Activated T-helper 1 cell treated with anti-CD3 and anti-CD28 coated beads, Interleukin-12 subunit alpha, Interleukin-12 subunit beta, Interleukin-2, Interleukin-4 antibody, amounts not matched to agents 30 ng/mL and 10 ng/mL and 1 ng/mL, durations not matched to agents 14 hours and 24 hours and 36 hours (primary cell): ENCODE measurements at regions of chr21 and their contacts with region 1.

Region 1: GRCh38 chr21:33976082-33977016 is 60.7 kb upstream of the ATP5PO start:
- DNase-seq: peak; percentile 48
- H3K4me3 Mint-ChIP-seq: peak overlapping the region; percentile 75
- H3K27ac Mint-ChIP-seq: peak overlapping the region; percentile 100
- H3K4me1 Mint-ChIP-seq: peaks cover 75% of the 10 kb centered on the region
- H3K27me3 Mint-ChIP-seq: no peaks in the 10 kb centered on the region

Region 2: GRCh38 chr21:33915368-33916199 is 60.8 kb before region 1 on chr21 and contains the start of gene ATP5PO:
- intact Hi-C with region 1: loop called (anchors 1 kb)
- DNase-seq: peak; percentile 97
- H3K4me3 Mint-ChIP-seq: peak within 1 kb of the TSS; percentile 99
- H3K27ac Mint-ChIP-seq: peak within 1 kb of the TSS; percentile 98
- H3K4me1 Mint-ChIP-seq: peaks cover 39% of the 10 kb centered on the region
- H3K27me3 Mint-ChIP-seq: no peaks in the 10 kb centered on the region
- total RNA-seq, gene ATP5PO: 168 and 176 TPM in 2 replicates

Region 3: GRCh38 chr21:33931799-33932390 is 44.5 kb before region 1 on chr21:
- intact Hi-C with region 1: loop called (anchors 5 kb)
- DNase-seq: no peak
- H3K4me3 Mint-ChIP-seq: peak overlapping the region; percentile 97
- H3K27ac Mint-ChIP-seq: peak overlapping the region; percentile 94
- H3K4me1 Mint-ChIP-seq: peaks cover 46% of the 10 kb centered on the region
- H3K27me3 Mint-ChIP-seq: no peaks in the 10 kb centered on the region

Region 4: DNA sequence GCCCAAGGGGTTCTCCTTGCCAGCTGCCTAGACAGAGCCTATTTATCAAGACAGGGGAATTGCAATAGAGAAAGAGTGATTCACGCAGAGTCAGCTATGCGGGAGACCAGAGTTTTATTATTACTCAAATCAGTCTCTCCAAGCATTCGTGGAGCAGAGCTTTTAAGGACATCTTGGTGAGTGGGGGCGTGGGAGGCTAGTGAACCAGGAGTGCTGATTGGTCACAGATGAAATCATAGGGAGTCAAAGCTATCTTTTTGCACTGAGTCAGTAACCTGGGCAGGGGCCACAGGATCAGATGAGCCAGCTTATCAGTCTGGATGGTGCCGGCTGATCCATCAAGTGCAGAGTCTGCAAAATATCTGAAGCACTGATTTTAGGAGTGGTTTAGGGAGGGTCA is 32.3 kb after region 1 on chr21:
- intact Hi-C with region 1: loop called (anchors 1 kb)
- DNase-seq: no peak
- H3K4me3 Mint-ChIP-seq: no peak overlapping the region
- H3K27ac Mint-ChIP-seq: peak overlapping the region; percentile 50
- H3K4me1 Mint-ChIP-seq: peaks cover 22% of the 10 kb centered on the region
- H3K27me3 Mint-ChIP-seq: no peaks in the 10 kb centered on the region

Region 5: GRCh38 chr21:34029743-34030528 is 53.6 kb after region 1 on chr21:
- intact Hi-C with region 1: loop called (anchors 2 kb)
- DNase-seq: peak; percentile 42
- H3K4me3 Mint-ChIP-seq: peak overlapping the region; percentile 51
- H3K27ac Mint-ChIP-seq: peak overlapping the region; percentile 96
- H3K4me1 Mint-ChIP-seq: peaks cover 30% of the 10 kb centered on the region
- H3K27me3 Mint-ChIP-seq: no peaks in the 10 kb centered on the region

Region 6: GRCh38 chr21:34129039-34129891 is 152.9 kb after region 1 on chr21:
- intact Hi-C with region 1: loop called (anchors 1 kb)
- DNase-seq: peak; percentile 72
- H3K4me3 Mint-ChIP-seq: peak overlapping the region; percentile 64
- H3K27ac Mint-ChIP-seq: peak overlapping the region; percentile 97
- H3K4me1 Mint-ChIP-seq: peaks cover 79% of the 10 kb centered on the region
- H3K27me3 Mint-ChIP-seq: no peaks in the 10 kb centered on the region

Region 7: DNA sequence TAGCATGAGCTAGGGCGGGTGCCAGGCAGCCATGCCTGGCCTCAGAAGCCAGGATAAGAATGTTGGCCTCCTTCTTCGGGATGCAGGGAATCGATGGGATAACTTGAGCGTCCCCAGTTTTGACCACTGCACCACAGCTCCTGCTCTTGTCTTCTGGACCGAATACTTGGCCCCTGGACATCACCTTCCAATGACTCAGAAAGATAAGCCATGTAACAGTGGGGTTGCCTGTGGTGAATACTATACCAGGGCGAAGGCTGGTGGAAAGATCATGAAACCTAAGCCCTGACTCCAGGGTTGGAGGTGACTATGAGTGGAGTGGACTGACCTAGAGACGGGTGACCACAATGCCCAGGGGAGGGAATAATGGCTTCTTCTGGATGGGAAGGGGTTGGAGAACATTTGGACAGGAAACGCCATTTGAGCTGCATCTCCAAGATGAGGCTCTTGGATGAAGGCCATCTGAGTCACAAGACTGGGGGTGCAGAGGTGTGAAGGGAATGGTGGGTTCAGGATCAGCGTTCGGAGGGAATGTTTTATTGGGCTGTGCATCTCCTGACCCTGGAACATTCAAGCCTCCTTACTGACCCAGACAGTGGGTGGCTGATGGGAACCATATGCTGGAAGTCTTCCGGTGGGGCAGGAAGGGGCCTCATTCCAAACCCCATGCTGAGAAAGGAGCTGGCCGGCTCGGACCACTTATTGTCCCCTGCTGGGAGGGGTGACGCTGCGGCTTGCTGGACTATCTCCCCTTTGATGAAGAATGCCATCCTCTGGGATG is 368.9 kb after region 1 on chr21:
- intact Hi-C with region 1: loop called (anchors 5 kb)
- DNase-seq: no peak
- H3K4me3 Mint-ChIP-seq: no peak overlapping the region
- H3K27ac Mint-ChIP-seq: no peak overlapping the region
- H3K4me1 Mint-ChIP-seq: peaks cover 17% of the 10 kb centered on the region
- H3K27me3 Mint-ChIP-seq: peaks cover 22% of the 10 kb centered on the region

Region 8: GRCh38 chr21:35020902-35021301 is 1044.6 kb after region 1 on chr21:
- intact Hi-C with region 1: no loop called
- DNase-seq: no peak
- H3K4me3 Mint-ChIP-seq: peak overlapping the region; percentile 27
- H3K27ac Mint-ChIP-seq: peak overlapping the region; percentile 36
- H3K4me1 Mint-ChIP-seq: peaks cover 81% of the 10 kb centered on the region
- H3K27me3 Mint-ChIP-seq: no peaks in the 10 kb centered on the region